PC-9 (cell line): ENCODE measurements at regions of chr19 and their contacts with region 1.

Region 1: DNA sequence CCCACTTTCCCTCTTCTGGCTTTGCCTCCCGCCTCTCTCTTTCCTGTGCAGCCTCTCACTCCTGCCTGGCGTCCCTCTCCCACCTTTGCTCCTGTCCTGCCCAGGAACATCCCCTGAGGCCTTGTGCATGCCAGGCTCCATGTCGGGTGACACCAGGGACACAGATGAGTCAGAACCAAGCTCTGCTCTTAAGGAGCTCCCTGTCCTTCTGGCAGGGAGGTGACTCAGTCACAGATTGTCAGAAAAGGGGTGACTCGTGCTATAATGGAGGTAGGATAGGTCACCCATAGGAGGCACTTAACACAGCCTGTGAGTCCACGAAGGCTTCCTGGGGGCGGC is 19.7 kb downstream of the FUZ start:
- DNase-seq: peak; percentile 82 to 94
- H3K4me3 ChIP-seq: no peak overlapping the region
- H3K27ac ChIP-seq: peak overlapping the region; percentile 40
- H3K4me1 ChIP-seq: peaks cover 18% of the 10 kb centered on the region
- H3K27me3 ChIP-seq: no peaks in the 10 kb centered on the region
- CTCF ChIP-seq: no peak

Region 2: DNA sequence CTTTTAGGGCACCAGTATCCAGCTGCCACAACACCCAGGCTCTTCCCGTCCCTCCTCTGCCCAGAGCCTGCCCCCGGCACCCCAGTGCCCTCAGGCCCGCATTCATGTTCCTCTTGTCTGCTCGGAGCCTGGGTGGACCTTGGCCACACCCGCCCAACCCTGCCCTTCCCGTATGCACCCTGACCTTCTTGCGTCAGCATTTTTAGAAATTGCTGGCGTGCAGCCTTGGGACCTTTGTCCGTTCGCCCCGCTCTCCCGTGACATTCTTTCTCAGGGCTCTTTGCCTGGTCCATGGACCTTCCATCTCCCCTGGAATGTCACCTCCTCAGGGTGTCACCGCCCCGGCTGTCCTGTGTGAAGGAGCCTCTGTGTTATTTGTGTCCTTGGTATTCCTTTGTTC is 885.7 kb before region 1 on chr19:
- CTCF ChIA-PET with region 1: no interaction called
- POLR2A ChIA-PET with region 1: no interaction called
- intact Hi-C with region 1: no loop called
- DNase-seq: no peak
- H3K4me3 ChIP-seq: no peak overlapping the region
- H3K27ac ChIP-seq: no peak overlapping the region
- H3K4me1 ChIP-seq: no peaks in the 10 kb centered on the region
- H3K27me3 ChIP-seq: no peaks in the 10 kb centered on the region
- CTCF ChIP-seq: no peak

Region 3: GRCh38 chr19:49127674-49128544 is 665.5 kb before region 1 on chr19:
- CTCF ChIA-PET with region 1: no interaction called
- POLR2A ChIA-PET with region 1: interaction called, 12 read pairs
- intact Hi-C with region 1: no loop called
- DNase-seq: peak; percentile 88 to 97
- H3K4me3 ChIP-seq: peak overlapping the region; percentile 50; the same call in 1 of the 2 replicates
- H3K27ac ChIP-seq: no peak overlapping the region
- H3K4me1 ChIP-seq: peaks cover 18% of the 10 kb centered on the region
- H3K27me3 ChIP-seq: no peaks in the 10 kb centered on the region
- CTCF ChIP-seq: no peak; the same call in 1 of the 2 replicates

Region 4: DNA sequence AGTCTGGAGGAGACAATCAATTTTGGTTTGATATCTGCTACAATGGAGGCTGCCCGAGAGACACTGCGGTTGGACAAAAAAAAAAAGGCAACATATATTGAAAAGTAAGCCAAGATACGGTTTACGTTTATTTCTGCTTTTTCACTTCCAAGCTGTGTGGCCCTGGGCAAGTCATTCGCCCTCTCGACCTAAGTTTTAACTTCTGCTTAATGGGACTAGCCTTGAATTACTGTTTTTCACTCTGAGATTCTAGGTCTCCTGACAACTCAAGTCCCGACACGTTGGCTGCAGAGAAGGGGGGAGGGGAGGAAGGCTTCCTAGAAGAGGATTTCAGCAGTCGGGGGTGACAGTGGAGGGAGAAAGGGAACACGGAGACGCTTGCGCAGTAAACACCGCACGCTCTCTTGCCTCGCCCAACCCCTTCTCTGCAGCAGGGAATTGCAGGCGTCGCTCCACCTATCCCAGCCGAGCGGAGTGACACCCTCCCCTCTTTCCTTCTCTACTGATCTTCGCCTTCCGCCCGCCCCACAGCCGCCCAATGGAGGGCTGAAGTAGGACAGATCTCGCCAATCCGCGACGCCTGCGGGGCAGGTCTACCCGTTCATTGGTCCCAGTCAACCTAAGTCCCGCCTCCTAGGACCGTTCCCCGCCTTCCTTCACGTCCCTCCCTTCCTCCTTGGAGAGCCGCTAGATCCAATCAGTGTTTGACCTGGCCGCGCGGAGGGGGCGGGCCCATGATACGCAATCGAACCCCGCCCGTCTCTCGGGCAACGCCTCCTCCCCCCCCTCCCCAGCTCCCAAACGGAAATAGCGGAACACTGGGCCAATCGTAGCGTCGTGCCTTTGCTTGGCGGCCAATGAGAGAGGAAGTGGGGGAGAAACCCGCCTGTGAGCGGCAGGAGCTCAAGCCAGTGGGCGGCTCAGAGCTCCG is 27.1 kb before region 1 on chr19:
- CTCF ChIA-PET with region 1: interaction called, 8 read pairs
- POLR2A ChIA-PET with region 1: interaction called, 14 read pairs
- intact Hi-C with region 1: no loop called
- DNase-seq: peak; percentile 99
- H3K4me3 ChIP-seq: peak overlapping the region; percentile 59
- H3K27ac ChIP-seq: peak overlapping the region; percentile 88
- H3K4me1 ChIP-seq: peaks cover 17% of the 10 kb centered on the region
- H3K27me3 ChIP-seq: no peaks in the 10 kb centered on the region
- CTCF ChIP-seq: no peak

Region 5: GRCh38 chr19:49850473-49851342 is 57.3 kb after region 1 on chr19 and contains the start of gene PTOV1:
- CTCF ChIA-PET with region 1: no interaction called
- POLR2A ChIA-PET with region 1: interaction called, 16 read pairs
- intact Hi-C with region 1: no loop called
- DNase-seq: peak; percentile 76 to 92
- H3K4me3 ChIP-seq: peak within 1 kb of the TSS; percentile 99
- H3K27ac ChIP-seq: peak within 1 kb of the TSS; percentile 90
- H3K4me1 ChIP-seq: peaks cover 37% of the 10 kb centered on the region
- H3K27me3 ChIP-seq: no peaks in the 10 kb centered on the region
- CTCF ChIP-seq: no peak
- total RNA-seq, gene PTOV1: 151 and 155 TPM in 2 replicates